ENCODE measurements at regions of chr2 and their contacts with region 1.

Region 1: DNA sequence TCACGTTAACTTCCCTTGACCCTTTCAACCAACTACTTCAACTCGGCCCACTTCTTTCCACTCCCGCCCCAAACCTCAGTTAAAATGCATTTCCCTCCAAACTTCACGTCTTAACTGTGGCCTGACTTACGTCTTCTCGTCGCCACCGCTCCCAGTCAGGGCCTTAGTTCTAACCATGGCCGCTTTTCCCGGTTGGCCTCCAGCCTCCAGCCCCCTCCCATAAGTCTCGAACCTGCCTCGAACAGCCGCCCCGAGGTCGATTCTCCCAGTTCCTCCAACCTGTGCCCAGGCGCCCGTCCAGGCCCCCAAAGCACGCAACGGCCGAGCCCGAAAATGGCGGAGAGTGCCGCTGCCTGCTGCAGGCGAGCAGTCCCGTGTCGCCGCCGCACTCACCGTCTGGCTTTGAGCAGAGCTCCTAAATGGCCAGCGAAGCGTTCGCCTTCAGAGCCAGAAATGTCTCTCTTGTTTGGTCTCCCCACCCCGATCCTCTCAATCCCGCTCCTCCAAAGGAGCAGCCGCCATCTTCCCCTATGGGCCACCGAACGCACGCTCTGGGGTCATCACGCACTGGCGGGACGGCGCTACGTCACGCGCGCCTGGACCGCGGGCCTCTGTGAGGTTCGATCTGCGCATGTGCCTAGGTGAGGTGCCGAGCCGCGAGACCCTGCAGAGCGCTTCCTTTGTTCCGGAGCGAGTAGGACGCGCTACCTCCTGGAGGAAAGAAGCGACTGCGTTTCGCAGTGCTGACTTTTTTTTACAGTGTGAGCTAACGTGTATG is at the start of gene WDR33:
- DNase-seq: peak; percentile 93
- ATAC-seq: peak; percentile 95
- H3K4me3 ChIP-seq: peak within 1 kb of the TSS; percentile 86
- H3K27ac ChIP-seq: peak within 1 kb of the TSS; percentile 61
- H3K4me1 ChIP-seq: peaks cover 20% of the 10 kb centered on the region
- H3K27me3 ChIP-seq: no peaks in the 10 kb centered on the region
- CTCF ChIP-seq: peak; percentile 27; the same call in 1 of the 2 replicates
- total RNA-seq, gene WDR33: 31.4 and 31.7 TPM in 2 replicates

Region 2: GRCh38 chr2:127743477-127744026 is 67.3 kb before region 1 on chr2:
- CTCF ChIA-PET with region 1: interaction called, 13 read pairs
- POLR2A ChIA-PET with region 1: no interaction called
- intact Hi-C with region 1: no loop called
- DNase-seq: no peak
- ATAC-seq: no peak
- H3K4me3 ChIP-seq: no peak overlapping the region
- H3K27ac ChIP-seq: no peak overlapping the region
- H3K4me1 ChIP-seq: no peaks in the 10 kb centered on the region
- H3K27me3 ChIP-seq: no peaks in the 10 kb centered on the region
- CTCF ChIP-seq: no peak

Region 3: GRCh38 chr2:127770973-127771735 is 39.7 kb before region 1 on chr2:
- CTCF ChIA-PET with region 1: no interaction called
- POLR2A ChIA-PET with region 1: no interaction called
- intact Hi-C with region 1: loop called (anchors 5 kb)
- DNase-seq: peak; percentile 83
- ATAC-seq: peak; percentile 94
- H3K4me3 ChIP-seq: no peak overlapping the region
- H3K27ac ChIP-seq: peak overlapping the region; percentile 80
- H3K4me1 ChIP-seq: peaks cover 20% of the 10 kb centered on the region
- H3K27me3 ChIP-seq: no peaks in the 10 kb centered on the region
- CTCF ChIP-seq: no peak

Region 4: GRCh38 chr2:128027801-128028667 is 217.2 kb after region 1 on chr2 and contains the start of gene SAP130:
- CTCF ChIA-PET with region 1: no interaction called
- POLR2A ChIA-PET with region 1: no interaction called
- intact Hi-C with region 1: loop called (anchors 5 kb)
- DNase-seq: peak; percentile 95
- ATAC-seq: peak; percentile 79
- H3K4me3 ChIP-seq: peak within 1 kb of the TSS; percentile 89
- H3K27ac ChIP-seq: peak within 1 kb of the TSS; percentile 52
- H3K4me1 ChIP-seq: 0 out of 2 replicates have a peak, but pooled peaks cover 11% of the 10 kb centered on the region
- H3K27me3 ChIP-seq: no peaks in the 10 kb centered on the region
- CTCF ChIP-seq: no peak
- total RNA-seq, gene SAP130: 11.1 and 13.0 TPM in 2 replicates

Measured in PC-3 (cell line).